Endothelial cell of umbilical vein (primary cell): ENCODE measurements at regions of chr1 and their contacts with region 1.

Region 1: GRCh38 chr1:54121482-54122134 is 31.2 kb downstream of the CDCP2 start:
- DNase-seq: peak; percentile 74
- H3K4me3 ChIP-seq: peak overlapping the region in 1 of 3 experiments; percentile 2
- H3K27ac ChIP-seq: no peak overlapping the region
- H3K4me1 ChIP-seq: peaks cover 3% of the 10 kb centered on the region
- H3K27me3 ChIP-seq: no peaks in the 10 kb centered on the region
- CTCF ChIP-seq: peak; percentile 77 to 88
- POLR2A ChIP-seq: no peak

Region 2: DNA sequence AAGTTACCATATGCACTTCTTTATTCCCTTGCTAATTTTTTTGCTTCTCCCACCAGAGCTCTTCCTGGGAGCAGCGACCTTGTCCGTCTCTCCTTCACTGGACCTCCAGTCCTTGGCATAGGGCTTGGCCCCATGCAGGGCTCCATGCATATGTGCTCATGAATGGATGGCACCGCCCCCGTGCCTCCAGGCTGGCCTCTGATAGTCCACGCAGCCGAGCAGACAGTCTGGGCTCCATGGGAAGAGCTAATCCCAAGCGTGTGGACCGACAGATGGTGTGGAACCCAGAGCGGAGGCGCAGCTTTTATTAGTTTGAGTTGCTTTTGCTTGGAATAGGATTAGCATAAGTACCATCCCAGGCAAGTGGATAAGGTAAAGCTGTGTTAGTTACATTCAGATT is 10.6 kb before region 1 on chr1:
- CTCF ChIA-PET with region 1: interaction called, 15 read pairs
- POLR2A ChIA-PET with region 1: no interaction called
- dilution Hi-C with region 1: no loop called
- intact Hi-C with region 1: no loop called
- DNase-seq: no peak
- H3K4me3 ChIP-seq: no peak overlapping the region
- H3K27ac ChIP-seq: no peak overlapping the region
- H3K4me1 ChIP-seq: no peaks in the 10 kb centered on the region
- H3K27me3 ChIP-seq: peaks cover 0 to 3% of the 10 kb centered on the region in 2 experiments
- CTCF ChIP-seq: no peak
- POLR2A ChIP-seq: no peak

Region 3: DNA sequence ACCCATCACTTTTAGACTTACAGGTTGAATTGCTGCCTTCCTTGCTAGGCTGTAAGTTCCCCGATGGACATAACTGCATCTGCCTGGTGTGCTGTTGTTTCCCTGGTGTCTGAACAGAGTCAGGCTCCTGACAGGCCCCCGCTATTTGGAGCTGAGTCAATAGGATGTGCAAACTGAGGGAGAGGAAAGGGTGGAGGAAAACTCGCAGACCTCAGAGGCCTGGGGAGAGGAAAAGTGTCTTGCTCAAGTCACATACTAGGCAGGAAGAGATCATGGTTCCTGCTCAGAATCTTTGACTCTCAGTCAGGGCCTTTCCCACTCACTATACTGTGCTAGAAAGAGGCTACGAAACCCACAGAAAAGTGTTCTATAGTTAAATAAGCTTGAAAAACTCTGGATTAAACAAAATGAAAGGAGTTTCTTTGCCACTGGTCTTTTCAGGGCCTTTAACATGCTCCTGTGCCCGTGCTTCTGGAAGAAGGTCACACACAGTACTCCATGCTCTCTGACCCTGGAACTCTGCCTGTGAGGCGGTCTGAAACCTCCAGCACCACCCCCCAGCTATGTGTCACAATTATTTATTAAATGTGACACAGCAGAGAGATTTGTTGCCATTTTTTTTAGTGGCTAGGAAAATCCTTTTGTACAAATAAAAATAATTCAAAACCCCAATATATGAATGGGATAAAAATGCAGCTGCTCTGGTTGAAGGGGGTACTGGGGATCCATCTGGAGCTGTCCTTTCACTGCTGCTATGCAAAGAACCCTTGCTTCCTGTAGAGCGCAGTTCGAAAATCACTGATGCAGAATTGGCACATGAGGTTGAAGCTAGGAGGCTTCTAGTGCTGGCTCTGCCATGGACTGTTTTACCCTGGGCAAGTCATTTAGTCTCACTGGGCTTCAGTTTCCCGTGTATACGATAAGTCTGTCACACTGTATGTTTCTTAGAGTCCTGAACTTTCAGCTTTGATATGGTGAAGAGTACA is 51.3 kb after region 1 on chr1:
- CTCF ChIA-PET with region 1: interaction called, 10 read pairs
- POLR2A ChIA-PET with region 1: no interaction called
- dilution Hi-C with region 1: no loop called
- intact Hi-C with region 1: no loop called
- DNase-seq: peak; percentile 72
- H3K4me3 ChIP-seq: no peak overlapping the region
- H3K27ac ChIP-seq: peak overlapping the region; percentile 54
- H3K4me1 ChIP-seq: peaks cover 17% of the 10 kb centered on the region
- H3K27me3 ChIP-seq: no peaks in the 10 kb centered on the region
- CTCF ChIP-seq: no peak
- POLR2A ChIP-seq: no peak

Region 4: GRCh38 chr1:54207287-54207686 is 85.7 kb after region 1 on chr1:
- CTCF ChIA-PET with region 1: interaction called, 11 read pairs
- POLR2A ChIA-PET with region 1: no interaction called
- dilution Hi-C with region 1: no loop called
- intact Hi-C with region 1: loop called (anchors 1 kb)
- DNase-seq: peak; percentile 43
- H3K4me3 ChIP-seq: no peak overlapping the region
- H3K27ac ChIP-seq: peak overlapping the region; percentile 33
- H3K4me1 ChIP-seq: peaks cover 12% of the 10 kb centered on the region
- H3K27me3 ChIP-seq: no peaks in the 10 kb centered on the region
- CTCF ChIP-seq: no peak
- POLR2A ChIP-seq: no peak

Region 5: GRCh38 chr1:54310439-54311328 is 189.1 kb after region 1 on chr1:
- CTCF ChIA-PET with region 1: interaction called, 6 read pairs
- POLR2A ChIA-PET with region 1: no interaction called
- dilution Hi-C with region 1: no loop called
- intact Hi-C with region 1: loop called (anchors 1 kb)
- DNase-seq: peak; percentile 68
- H3K4me3 ChIP-seq: no peak overlapping the region
- H3K27ac ChIP-seq: no peak overlapping the region
- H3K4me1 ChIP-seq: peaks cover 12% of the 10 kb centered on the region
- H3K27me3 ChIP-seq: no peaks in the 10 kb centered on the region
- CTCF ChIP-seq: peak; percentile 73 to 79
- POLR2A ChIP-seq: no peak

Region 6: GRCh38 chr1:54810100-54810942 is 688.7 kb after region 1 on chr1:
- CTCF ChIA-PET with region 1: interaction called, 4 read pairs
- POLR2A ChIA-PET with region 1: no interaction called
- dilution Hi-C with region 1: no loop called
- intact Hi-C with region 1: loop called (anchors 1 kb)
- DNase-seq: peak; percentile 54
- H3K4me3 ChIP-seq: no peak overlapping the region
- H3K27ac ChIP-seq: no peak overlapping the region
- H3K4me1 ChIP-seq: no peaks in the 10 kb centered on the region
- H3K27me3 ChIP-seq: no peaks in the 10 kb centered on the region
- CTCF ChIP-seq: peak; percentile 76 to 89
- POLR2A ChIP-seq: no peak